ENCODE measurements at regions of chr10 and their contacts with region 1.

Region 1: DNA sequence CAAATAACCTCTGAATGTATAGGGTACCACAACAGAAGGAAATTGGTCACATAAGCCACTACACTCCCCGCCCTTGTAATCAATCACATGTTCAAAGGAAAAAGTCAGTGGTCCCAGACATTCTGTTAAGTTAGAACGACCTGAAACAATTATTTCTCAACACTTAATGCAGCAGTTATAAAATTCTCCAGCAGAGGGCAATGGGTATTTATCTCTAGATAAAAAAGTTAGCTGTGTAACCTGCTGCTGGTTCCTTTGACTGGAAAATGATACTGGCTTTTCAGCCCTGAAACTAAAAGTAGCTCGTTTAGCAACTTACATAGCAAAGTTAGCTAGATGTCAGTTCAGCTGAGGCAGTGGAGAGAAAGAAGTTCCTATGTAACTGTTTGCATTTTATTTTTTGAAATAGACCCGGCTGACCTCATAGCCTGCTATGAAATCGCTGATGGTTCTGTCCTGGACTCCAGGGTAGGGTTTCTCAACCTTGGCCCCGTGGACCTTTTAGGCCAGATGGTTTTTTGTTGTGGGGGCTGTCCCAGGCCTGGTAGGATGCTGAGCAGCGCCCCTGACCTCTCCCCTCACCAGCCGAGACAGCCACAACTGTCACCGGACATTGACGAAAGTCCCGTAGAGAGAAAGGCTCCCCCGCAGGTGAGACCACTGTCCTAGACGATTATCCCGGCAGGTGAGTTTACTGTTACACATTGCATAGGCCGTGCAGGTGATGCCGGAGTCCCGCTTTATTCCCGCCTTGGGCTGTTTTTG is 40.2 kb upstream of the PROSER2 start:
- DNase-seq: no peak
- H3K4me3 Mint-ChIP-seq: no peak overlapping the region
- H3K27ac Mint-ChIP-seq: no peak overlapping the region
- H3K4me1 Mint-ChIP-seq: peaks cover 4% of the 10 kb centered on the region
- H3K27me3 Mint-ChIP-seq: peaks cover 31% of the 10 kb centered on the region

Region 2: GRCh38 chr10:11424456-11425297 is 358.3 kb before region 1 on chr10:
- CTCF ChIA-PET with region 1: no interaction called
- DNase-seq: no peak
- H3K4me3 Mint-ChIP-seq: no peak overlapping the region
- H3K27ac Mint-ChIP-seq: no peak overlapping the region
- H3K4me1 Mint-ChIP-seq: peaks cover 3% of the 10 kb centered on the region
- H3K27me3 Mint-ChIP-seq: peaks cover 3% of the 10 kb centered on the region

Region 3: DNA sequence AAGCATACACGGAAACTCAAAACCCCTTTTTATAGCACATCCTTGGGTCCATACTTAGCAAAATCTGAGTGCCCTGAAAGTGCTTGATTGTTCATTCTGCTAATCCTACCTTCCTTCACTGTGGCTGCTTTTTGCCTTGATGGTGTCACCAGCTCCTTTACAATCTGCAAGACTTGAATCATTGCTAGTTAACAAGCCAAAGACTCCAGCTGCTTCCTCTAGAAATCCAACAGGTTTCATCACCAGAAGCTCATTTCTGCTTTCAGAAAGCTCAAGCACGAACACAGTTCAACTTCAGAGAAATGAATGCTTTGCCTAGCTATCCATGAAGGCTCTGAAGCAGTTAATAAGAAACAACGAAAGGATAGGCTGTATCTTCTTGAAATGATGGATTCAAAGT is 209.5 kb before region 1 on chr10:
- CTCF ChIA-PET with region 1: no interaction called
- DNase-seq: no peak
- H3K4me3 Mint-ChIP-seq: no peak overlapping the region
- H3K27ac Mint-ChIP-seq: no peak overlapping the region
- H3K4me1 Mint-ChIP-seq: no peaks in the 10 kb centered on the region
- H3K27me3 Mint-ChIP-seq: no peaks in the 10 kb centered on the region

Region 4: DNA sequence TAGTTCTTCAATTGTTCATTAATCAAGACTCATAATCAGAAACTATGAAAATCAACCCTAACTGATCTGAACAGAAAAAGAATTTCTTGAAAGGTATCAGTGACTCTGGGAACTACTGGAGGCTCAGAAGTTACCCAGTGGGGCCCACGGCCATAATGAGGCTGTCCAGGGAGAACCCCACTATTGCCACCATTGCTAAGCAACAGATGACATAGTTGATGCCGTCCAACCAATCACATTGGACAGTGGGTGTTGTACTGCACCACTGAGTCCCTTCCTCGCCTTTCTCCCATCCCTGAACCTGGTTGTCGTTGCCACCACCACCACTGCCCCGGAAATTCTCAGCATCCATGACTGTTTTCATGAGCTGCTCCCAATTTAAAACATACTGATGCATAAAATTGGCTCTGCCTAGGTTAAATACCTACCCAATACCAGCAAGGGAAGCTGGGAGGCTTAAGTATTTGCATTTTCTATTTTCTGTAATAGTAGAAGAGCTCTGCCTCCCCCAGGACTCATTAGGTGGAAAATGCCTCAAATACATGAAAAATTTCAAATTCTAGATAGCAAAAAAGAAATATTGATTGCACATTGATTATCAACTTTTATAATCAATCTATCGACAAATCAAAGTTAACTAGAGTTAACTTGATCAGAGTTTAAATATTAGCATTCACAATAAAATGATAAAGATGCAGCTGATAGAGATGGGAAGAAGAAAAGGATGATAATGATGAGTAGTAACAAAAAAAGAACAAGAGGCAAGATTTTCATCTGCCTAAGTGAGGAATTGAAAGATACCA is 144.7 kb before region 1 on chr10:
- CTCF ChIA-PET with region 1: no interaction called
- DNase-seq: no peak
- H3K4me3 Mint-ChIP-seq: no peak overlapping the region
- H3K27ac Mint-ChIP-seq: no peak overlapping the region
- H3K4me1 Mint-ChIP-seq: peaks cover 4% of the 10 kb centered on the region
- H3K27me3 Mint-ChIP-seq: peaks cover 48% of the 10 kb centered on the region

Region 5: GRCh38 chr10:11819030-11819429 is 36.1 kb after region 1 on chr10:
- CTCF ChIA-PET with region 1: interaction called, 13 read pairs
- DNase-seq: no peak
- H3K4me3 Mint-ChIP-seq: no peak overlapping the region
- H3K27ac Mint-ChIP-seq: no peak overlapping the region
- H3K4me1 Mint-ChIP-seq: peaks cover 7% of the 10 kb centered on the region
- H3K27me3 Mint-ChIP-seq: peaks cover 54% of the 10 kb centered on the region

Region 6: DNA sequence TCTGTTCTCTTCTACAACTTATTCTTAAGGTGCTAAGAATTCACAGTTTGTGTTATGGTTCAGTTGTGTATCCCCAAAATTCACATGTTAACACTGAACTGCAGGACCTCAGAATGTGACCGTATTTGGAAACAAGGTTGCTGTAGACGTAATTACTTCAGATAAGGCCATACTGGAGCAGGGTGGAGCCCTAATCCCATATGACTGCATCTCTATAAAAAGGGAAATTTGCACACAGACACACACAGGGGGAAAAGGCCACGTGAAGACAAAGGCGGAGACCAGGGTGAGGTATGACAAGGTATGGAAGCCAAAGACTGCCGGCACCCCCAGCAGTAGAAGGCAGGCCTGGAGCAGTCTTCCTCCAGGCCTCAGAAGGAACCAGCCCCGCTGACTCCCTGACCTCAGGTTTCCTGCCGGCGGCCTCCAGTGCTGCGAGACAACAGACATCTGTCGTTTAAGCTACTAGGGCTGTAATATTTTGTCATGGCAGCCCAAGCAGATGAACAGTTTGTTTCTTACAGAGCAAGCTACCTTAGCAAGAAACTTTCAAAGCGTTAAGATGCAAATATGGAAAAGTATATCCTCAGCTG is 138.9 kb after region 1 on chr10:
- CTCF ChIA-PET with region 1: no interaction called
- DNase-seq: no peak
- H3K4me3 Mint-ChIP-seq: no peak overlapping the region
- H3K27ac Mint-ChIP-seq: no peak overlapping the region
- H3K4me1 Mint-ChIP-seq: no peaks in the 10 kb centered on the region
- H3K27me3 Mint-ChIP-seq: no peaks in the 10 kb centered on the region

Region 7: DNA sequence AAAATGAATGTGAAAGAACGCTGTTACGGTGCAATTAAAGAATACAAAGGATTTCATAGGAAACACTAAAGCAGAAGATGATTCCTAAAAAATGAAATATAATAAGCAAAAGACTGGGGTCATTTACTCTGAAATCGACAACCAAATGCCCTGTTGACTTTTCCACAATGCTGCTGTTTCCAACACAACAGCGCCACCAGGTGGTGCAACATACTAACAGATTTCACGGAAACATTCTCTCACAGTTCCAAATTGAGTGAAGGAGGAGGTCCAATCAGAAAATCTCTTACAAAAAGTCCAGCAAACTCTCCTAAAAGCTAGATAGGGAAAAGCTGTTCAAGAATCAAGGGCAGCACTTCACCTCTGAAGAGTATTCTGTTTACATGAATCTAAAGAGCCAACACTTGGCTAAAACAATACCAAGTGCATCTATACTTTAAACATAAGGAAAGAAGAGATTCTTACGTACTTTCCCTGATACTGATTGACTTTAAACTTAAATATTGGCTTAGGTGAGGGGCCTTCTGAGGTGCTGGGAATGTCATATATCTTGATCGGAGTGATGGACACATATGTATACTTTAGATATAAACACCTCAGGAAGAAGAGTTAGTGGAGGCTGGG is 203.7 kb after region 1 on chr10:
- CTCF ChIA-PET with region 1: interaction called, 27 read pairs
- DNase-seq: peak; percentile 79
- H3K4me3 Mint-ChIP-seq: no peak overlapping the region
- H3K27ac Mint-ChIP-seq: no peak overlapping the region
- H3K4me1 Mint-ChIP-seq: no peaks in the 10 kb centered on the region
- H3K27me3 Mint-ChIP-seq: no peaks in the 10 kb centered on the region